Cardiac septum (tissue), 1 donor: ENCODE measurements at regions of chr1 and their contacts with region 1.

Region 1: GRCh38 chr1:230167419-230167852 is 100.4 kb downstream of the GALNT2 start:
- DNase-seq: no peak

Region 2: GRCh38 chr1:229661022-229661877 is 506.2 kb before region 1 on chr1:
- intact Hi-C with region 1: loop called (anchors 5 kb)
- DNase-seq: peak; percentile 91

Region 3: DNA sequence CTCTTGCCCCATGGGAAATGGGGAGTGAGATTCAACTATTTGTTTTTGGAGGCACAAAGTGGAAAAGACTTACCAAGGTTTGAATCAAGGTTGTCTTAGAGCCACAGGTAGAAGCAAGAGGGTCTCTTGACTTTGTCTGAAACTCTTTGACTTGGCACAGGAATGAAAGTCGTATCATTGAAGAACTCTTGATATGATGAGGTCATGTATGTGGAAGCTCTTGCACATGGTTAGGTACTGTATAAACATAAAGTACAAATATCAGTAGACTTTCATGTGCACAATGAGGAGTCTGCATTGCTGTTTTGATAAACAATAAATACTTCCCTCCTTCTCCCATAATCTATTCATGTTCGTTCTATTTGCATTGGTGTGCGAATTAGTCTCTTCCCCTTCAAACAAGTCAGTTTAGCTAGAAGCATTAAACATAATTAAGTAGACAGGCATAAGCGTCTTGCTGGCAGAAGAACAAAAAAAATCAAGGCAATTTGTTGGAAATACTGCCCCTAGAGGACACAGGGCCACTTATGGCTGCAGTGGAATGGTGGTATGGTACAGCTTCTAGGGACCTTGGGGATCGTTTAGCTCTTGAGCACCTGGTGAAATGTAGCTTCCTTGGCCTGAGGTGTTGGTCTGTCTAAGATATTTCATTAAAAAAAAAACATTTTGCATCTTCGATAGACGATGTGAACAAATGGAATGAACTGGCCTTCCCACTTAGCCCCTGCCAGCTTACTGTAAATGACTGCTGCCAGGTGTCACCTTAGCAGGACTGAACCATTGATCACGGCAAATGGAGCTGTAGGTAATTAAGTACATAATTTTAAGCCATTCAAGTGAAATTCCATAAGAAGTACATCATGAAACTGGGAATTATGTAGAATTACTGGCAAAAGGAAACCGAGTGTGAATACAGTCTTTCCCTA is 318.4 kb before region 1 on chr1:
- intact Hi-C with region 1: loop called (anchors 10 kb)
- DNase-seq: no peak

Region 4: GRCh38 chr1:230104395-230105244 is 62.8 kb before region 1 on chr1:
- intact Hi-C with region 1: no loop called
- DNase-seq: peak; percentile 96